PC-3 (cell line): ENCODE measurements at regions of chr12 and their contacts with region 1.

Region 1: GRCh38 chr12:41302979-41303403 is 114.9 kb downstream of the PDZRN4 start:
- DNase-seq: peak; percentile 74
- ATAC-seq: peak; percentile 10
- H3K4me3 ChIP-seq: no peak overlapping the region
- H3K27ac ChIP-seq: no peak overlapping the region
- H3K4me1 ChIP-seq: peaks cover 36% of the 10 kb centered on the region
- H3K27me3 ChIP-seq: no peaks in the 10 kb centered on the region
- CTCF ChIP-seq: no peak

Region 2: DNA sequence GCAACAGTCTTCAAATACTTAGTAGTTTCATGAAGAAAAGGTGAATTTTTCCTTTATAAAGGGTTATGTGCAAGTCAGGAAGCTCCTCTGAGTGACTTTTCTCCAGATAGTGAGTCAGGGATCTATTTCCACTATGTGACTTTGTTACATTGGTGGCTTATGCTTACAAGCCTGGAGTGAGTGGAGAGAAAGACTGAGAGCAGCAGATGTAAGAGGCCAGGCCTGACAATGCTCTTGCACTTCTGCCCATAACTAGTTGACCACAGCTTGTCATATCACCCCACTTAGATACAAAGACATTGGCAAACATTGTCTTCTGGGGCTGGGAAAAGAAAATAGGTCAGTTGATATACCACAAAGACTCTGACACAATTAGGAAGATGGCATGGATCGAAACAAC is 121.7 kb after region 1 on chr12:
- CTCF ChIA-PET with region 1: no interaction called
- POLR2A ChIA-PET with region 1: interaction called, 4 read pairs
- intact Hi-C with region 1: loop called (anchors 10 kb)
- DNase-seq: no peak
- ATAC-seq: peak; percentile 81
- H3K4me3 ChIP-seq: no peak overlapping the region
- H3K27ac ChIP-seq: peak overlapping the region; percentile 27
- H3K4me1 ChIP-seq: no peaks in the 10 kb centered on the region
- H3K27me3 ChIP-seq: no peaks in the 10 kb centered on the region
- CTCF ChIP-seq: no peak

Region 3: GRCh38 chr12:42469355-42470175 is 1166.6 kb after region 1 on chr12:
- CTCF ChIA-PET with region 1: no interaction called
- POLR2A ChIA-PET with region 1: no interaction called
- intact Hi-C with region 1: loop called (anchors 10 kb)
- DNase-seq: no peak
- ATAC-seq: no peak
- H3K4me3 ChIP-seq: no peak overlapping the region
- H3K27ac ChIP-seq: no peak overlapping the region
- H3K4me1 ChIP-seq: peaks cover 18% of the 10 kb centered on the region
- H3K27me3 ChIP-seq: no peaks in the 10 kb centered on the region
- CTCF ChIP-seq: no peak